ENCODE measurements at regions of chr22 and their contacts with region 1.

Region 1: DNA sequence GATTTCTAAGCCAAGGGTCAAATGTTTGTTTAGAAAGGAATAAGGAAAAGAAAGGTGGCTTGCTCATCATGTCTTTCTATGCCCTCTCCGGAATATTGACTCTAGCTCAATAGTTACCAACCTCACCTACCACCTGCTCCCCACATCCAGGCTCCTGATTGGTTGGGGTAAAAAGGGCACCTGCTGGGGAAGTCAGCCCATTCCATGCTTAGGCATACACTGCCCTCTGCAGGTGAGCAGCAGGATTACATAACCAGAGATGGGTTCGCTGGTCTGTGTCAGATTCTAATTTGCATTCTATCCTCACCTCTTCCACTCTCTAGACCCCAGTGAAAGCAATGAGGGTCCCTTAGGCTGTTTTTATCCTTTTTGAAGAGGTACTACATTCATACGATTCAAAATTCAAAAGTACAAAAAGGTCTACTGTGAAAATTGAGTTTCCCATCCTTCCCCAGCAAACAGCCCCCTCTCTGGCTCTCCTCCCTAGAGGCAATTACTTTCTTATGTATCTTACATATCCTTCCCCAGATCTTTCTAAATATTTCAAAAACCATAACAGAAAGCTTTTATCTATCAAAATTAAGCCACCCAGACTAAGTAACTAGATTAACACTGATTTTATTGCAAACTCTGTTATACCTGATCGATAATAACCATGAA is 98.0 kb upstream of the ASPHD2 start:
- DNase-seq: peak; percentile 21 to 70 (median 46)
- ATAC-seq: peak; percentile 87
- H3K4me3 ChIP-seq: no peak overlapping the region
- H3K4me3 Mint-ChIP-seq: no peak overlapping the region
- H3K27ac ChIP-seq: no peak overlapping the region
- H3K27ac Mint-ChIP-seq: no peak overlapping the region
- H3K4me1 ChIP-seq: no peaks in the 10 kb centered on the region
- H3K4me1 Mint-ChIP-seq: no peaks in the 10 kb centered on the region
- H3K27me3 ChIP-seq: no peaks in the 10 kb centered on the region
- H3K27me3 Mint-ChIP-seq: peaks cover 23% of the 10 kb centered on the region
- CTCF ChIP-seq: peak; percentile 71

Region 2: DNA sequence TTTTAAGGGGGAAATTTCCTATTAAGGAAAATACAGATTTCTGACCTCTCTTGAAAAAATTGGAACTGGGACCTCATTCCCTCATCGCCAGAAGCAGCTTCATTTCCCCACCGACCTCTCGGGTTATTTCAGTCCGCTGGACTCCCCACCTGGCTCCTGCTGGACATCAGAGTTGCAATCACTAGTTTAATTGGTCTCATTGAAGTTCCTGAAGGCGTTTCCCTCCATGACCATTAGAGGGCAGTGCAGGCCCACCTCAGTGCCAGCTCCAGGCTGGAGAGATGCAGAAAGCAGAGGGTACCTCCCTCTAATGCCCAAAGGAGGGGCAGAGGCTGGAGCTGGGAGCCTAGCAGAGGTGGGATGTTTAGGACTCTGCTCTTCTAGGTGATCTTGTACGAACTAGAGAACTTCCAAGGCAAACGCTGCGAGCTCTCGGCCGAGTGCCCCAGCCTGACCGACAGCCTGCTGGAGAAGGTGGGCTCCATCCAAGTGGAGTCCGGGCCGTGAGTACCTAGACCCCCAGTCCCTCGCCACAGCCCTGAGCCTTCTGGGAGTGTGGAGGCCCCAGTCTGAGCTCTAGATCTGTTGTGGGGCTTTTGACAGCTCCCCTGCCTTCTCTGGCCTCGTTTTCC is 1128.7 kb before region 1 on chr22:
- CTCF ChIA-PET with region 1: no interaction called
- POLR2A ChIA-PET with region 1: no interaction called
- intact Hi-C with region 1: loop called in 1 of 2 experiments (anchors 1 kb)
- DNase-seq: peak; percentile 18 to 64 (median 52)
- ATAC-seq: peak; percentile 68
- H3K4me3 ChIP-seq: no peak overlapping the region
- H3K4me3 Mint-ChIP-seq: no peak overlapping the region
- H3K27ac ChIP-seq: no peak overlapping the region
- H3K27ac Mint-ChIP-seq: no peak overlapping the region
- H3K4me1 ChIP-seq: no peaks in the 10 kb centered on the region
- H3K4me1 Mint-ChIP-seq: no peaks in the 10 kb centered on the region
- H3K27me3 ChIP-seq: no peaks in the 10 kb centered on the region
- H3K27me3 Mint-ChIP-seq: no peaks in the 10 kb centered on the region
- CTCF ChIP-seq: peak; percentile 88

Region 3: DNA sequence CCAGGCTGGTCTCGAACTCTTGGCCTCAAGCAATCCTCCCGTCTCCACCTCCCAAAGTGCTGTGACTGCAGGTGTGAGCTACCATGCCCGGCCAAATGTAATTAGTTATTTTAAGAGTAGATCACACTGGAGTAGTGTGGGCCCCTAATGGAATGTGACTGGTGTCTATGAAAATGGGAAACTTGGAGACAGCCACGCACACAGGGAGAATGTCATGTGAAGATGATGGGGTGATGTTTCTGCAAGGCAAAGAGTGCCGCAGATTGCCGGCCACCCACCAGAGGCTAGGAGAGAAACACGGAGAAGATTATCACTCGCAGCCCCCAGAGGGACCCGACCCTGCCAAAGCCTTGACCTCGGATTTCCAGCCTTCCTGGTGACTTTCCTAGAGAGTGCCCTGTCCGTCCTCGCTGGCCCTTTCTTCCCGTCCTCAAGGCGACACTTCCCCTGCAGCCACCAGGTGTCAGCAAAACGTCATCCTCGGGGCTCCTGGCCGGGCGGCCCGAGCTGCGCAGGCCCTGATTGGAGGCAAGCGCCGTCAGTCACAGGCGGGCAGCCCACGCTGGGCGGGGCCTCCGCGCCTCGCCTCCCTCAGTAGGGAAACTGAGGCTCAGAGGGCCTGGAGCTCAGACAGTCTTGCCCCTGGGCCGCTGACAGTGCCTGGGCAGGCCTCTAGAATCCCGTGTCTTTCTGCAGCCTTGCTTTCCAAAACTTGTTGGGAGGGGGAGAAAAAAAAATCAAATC is 1095.4 kb before region 1 on chr22:
- CTCF ChIA-PET with region 1: no interaction called
- POLR2A ChIA-PET with region 1: no interaction called
- intact Hi-C with region 1: loop called in 1 of 2 experiments (anchors 5 kb)
- DNase-seq: peak; percentile 14 to 74 (median 48)
- ATAC-seq: peak; percentile 65
- H3K4me3 ChIP-seq: no peak overlapping the region
- H3K4me3 Mint-ChIP-seq: no peak overlapping the region
- H3K27ac ChIP-seq: no peak overlapping the region
- H3K27ac Mint-ChIP-seq: no peak overlapping the region
- H3K4me1 ChIP-seq: peaks cover 5% of the 10 kb centered on the region
- H3K4me1 Mint-ChIP-seq: peaks cover 4% of the 10 kb centered on the region
- H3K27me3 ChIP-seq: no peaks in the 10 kb centered on the region
- H3K27me3 Mint-ChIP-seq: peaks cover 51% of the 10 kb centered on the region
- CTCF ChIP-seq: peak; percentile 32

Region 4: GRCh38 chr22:25465949-25466348 is 865.1 kb before region 1 on chr22:
- CTCF ChIA-PET with region 1: no interaction called
- POLR2A ChIA-PET with region 1: no interaction called
- intact Hi-C with region 1: loop called in 1 of 2 experiments (anchors 1 kb)
- DNase-seq: no peak
- ATAC-seq: no peak
- H3K4me3 ChIP-seq: no peak overlapping the region
- H3K4me3 Mint-ChIP-seq: no peak overlapping the region
- H3K27ac ChIP-seq: no peak overlapping the region
- H3K27ac Mint-ChIP-seq: no peak overlapping the region
- H3K4me1 ChIP-seq: no peaks in the 10 kb centered on the region
- H3K4me1 Mint-ChIP-seq: peaks cover 2% of the 10 kb centered on the region
- H3K27me3 ChIP-seq: no peaks in the 10 kb centered on the region
- H3K27me3 Mint-ChIP-seq: no peaks in the 10 kb centered on the region
- CTCF ChIP-seq: no peak

Region 5: DNA sequence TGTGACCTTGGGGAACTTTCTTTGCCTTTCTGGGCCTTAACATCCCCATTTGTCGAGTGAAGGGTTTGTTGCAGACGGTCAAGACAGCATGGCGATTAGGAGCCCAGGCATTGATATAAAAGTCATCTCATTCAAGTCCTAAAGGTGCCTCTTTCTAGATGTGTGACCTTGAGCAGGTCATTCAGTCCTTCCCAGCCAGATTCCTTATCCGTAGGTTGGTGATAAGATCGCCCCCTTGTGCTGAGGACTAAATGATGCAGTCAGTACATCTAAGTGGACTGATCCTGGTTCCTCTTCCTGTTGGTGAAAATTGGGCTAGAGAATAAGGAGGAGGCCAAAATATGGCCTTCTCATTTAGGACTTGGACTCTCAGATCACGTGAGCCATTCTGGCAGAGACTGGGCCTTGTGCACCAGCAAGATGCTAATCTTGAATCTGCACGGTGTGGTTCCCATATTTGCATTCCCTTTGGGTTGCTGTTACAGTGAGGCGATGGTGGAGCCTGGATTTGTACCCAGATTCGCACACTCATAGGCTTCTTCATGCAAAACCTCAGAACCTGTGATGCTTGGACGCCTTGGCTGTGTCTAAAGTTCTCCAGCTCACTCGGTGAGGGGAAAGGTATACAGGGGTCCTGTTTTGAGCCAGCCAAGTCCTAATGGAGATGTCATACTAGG is 432.3 kb before region 1 on chr22:
- CTCF ChIA-PET with region 1: no interaction called
- POLR2A ChIA-PET with region 1: no interaction called
- intact Hi-C with region 1: loop called in 1 of 2 experiments (anchors 5 kb)
- DNase-seq: no peak
- ATAC-seq: no peak
- H3K4me3 ChIP-seq: no peak overlapping the region
- H3K4me3 Mint-ChIP-seq: no peak overlapping the region
- H3K27ac ChIP-seq: no peak overlapping the region
- H3K27ac Mint-ChIP-seq: no peak overlapping the region
- H3K4me1 ChIP-seq: no peaks in the 10 kb centered on the region
- H3K4me1 Mint-ChIP-seq: no peaks in the 10 kb centered on the region
- H3K27me3 ChIP-seq: no peaks in the 10 kb centered on the region
- H3K27me3 Mint-ChIP-seq: peaks cover 21% of the 10 kb centered on the region
- CTCF ChIP-seq: no peak

Region 6: GRCh38 chr22:25997886-25998775 is 333.0 kb before region 1 on chr22:
- CTCF ChIA-PET with region 1: no interaction called
- POLR2A ChIA-PET with region 1: no interaction called
- intact Hi-C with region 1: no loop called
- DNase-seq: no peak
- ATAC-seq: no peak
- H3K4me3 ChIP-seq: no peak overlapping the region
- H3K4me3 Mint-ChIP-seq: no peak overlapping the region
- H3K27ac ChIP-seq: no peak overlapping the region
- H3K27ac Mint-ChIP-seq: no peak overlapping the region
- H3K4me1 ChIP-seq: no peaks in the 10 kb centered on the region
- H3K4me1 Mint-ChIP-seq: no peaks in the 10 kb centered on the region
- H3K27me3 ChIP-seq: peaks cover 0 to 4% of the 10 kb centered on the region in 2 experiments
- H3K27me3 Mint-ChIP-seq: peaks cover 7% of the 10 kb centered on the region
- CTCF ChIP-seq: no peak

Region 7: DNA sequence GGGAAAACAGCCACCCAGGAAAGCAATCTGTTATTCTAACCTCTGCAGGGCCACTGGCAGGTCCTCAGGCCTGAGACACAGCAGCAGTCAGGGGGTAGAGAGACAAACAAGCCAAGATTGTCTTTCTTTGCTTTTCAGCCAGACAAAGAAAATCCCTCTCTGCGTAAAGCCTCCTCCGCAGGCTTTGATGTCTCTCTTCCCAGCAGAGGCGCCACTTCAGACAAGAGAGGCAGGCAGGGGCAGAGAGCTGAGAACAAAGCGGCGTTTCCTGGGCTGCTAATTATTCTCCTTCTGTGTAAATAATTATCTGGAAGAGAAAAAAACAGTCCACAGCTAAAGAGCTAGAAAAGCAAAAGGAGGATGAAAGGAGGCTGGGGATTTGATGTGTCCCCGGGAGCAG is 264.6 kb before region 1 on chr22:
- CTCF ChIA-PET with region 1: no interaction called
- POLR2A ChIA-PET with region 1: no interaction called
- intact Hi-C with region 1: no loop called
- DNase-seq: no peak
- ATAC-seq: no peak
- H3K4me3 ChIP-seq: no peak overlapping the region
- H3K4me3 Mint-ChIP-seq: no peak overlapping the region
- H3K27ac ChIP-seq: no peak overlapping the region
- H3K27ac Mint-ChIP-seq: no peak overlapping the region
- H3K4me1 ChIP-seq: no peaks in the 10 kb centered on the region
- H3K4me1 Mint-ChIP-seq: no peaks in the 10 kb centered on the region
- H3K27me3 ChIP-seq: no peaks in the 10 kb centered on the region
- H3K27me3 Mint-ChIP-seq: peaks cover 28% of the 10 kb centered on the region
- CTCF ChIP-seq: no peak

Region 8: DNA sequence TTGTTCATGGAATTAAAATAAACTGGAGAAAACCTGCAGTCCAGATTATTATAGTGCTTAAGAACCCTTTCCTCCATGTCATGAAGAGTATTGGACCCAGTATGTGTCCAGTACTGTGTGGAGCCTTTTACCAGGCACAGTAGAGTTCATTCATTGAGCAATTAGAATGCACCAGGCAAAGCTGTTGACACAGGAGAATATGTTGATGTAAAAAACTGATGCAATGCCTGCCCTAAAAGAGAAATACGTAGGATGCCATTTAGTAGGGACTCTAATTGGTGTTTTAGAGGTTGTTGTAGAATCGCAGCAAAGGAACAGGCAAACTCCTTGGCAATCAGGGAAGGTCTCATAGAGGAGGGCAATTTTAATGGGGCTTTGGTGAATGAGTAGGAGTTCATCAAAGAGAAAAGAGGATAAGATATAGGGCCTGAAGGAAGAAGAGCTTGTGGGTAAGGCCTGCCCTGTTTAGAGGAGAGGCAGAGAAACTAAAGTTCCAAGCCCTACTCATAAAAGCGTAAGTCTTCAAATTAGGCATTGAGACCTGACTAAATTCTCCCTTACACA is 35.5 kb before region 1 on chr22:
- CTCF ChIA-PET with region 1: no interaction called
- POLR2A ChIA-PET with region 1: no interaction called
- intact Hi-C with region 1: no loop called
- DNase-seq: no peak
- ATAC-seq: no peak
- H3K4me3 ChIP-seq: no peak overlapping the region
- H3K4me3 Mint-ChIP-seq: no peak overlapping the region
- H3K27ac ChIP-seq: no peak overlapping the region
- H3K27ac Mint-ChIP-seq: no peak overlapping the region
- H3K4me1 ChIP-seq: peaks cover 5% of the 10 kb centered on the region
- H3K4me1 Mint-ChIP-seq: peaks cover 14% of the 10 kb centered on the region
- H3K27me3 ChIP-seq: no peaks in the 10 kb centered on the region
- H3K27me3 Mint-ChIP-seq: no peaks in the 10 kb centered on the region
- CTCF ChIP-seq: no peak

Region 9: DNA sequence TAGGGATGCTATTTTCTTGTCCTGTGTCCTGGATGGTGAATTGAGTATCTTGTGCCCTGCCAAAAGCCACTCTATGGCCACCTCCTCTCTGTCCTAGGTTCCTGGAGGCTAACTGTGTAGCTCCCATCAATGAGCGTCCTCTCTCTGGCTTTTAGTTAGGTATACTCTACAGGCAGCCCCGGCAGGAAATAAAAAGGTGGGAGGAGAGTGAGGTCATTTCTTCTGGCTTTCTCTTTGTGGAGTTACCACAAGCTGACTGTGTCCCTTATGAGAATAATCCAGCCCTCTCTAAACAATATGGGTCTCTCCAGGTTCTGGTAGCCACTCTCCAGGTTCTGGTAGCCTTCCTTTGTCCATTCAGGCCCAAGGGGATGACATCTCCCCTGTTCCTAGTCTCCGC is 86.3 kb after region 1 on chr22:
- CTCF ChIA-PET with region 1: no interaction called
- POLR2A ChIA-PET with region 1: no interaction called
- intact Hi-C with region 1: no loop called
- DNase-seq: no peak
- ATAC-seq: no peak
- H3K4me3 ChIP-seq: no peak overlapping the region
- H3K4me3 Mint-ChIP-seq: no peak overlapping the region
- H3K27ac ChIP-seq: no peak overlapping the region
- H3K27ac Mint-ChIP-seq: no peak overlapping the region
- H3K4me1 ChIP-seq: no peaks in the 10 kb centered on the region
- H3K4me1 Mint-ChIP-seq: no peaks in the 10 kb centered on the region
- H3K27me3 ChIP-seq: no peaks in the 10 kb centered on the region
- H3K27me3 Mint-ChIP-seq: peaks cover 20% of the 10 kb centered on the region
- CTCF ChIP-seq: no peak

Measured in CD8-positive, alpha-beta T cell (primary cell).